ENCODE measurements at regions of chr1 and their contacts with region 1.

Region 1: DNA sequence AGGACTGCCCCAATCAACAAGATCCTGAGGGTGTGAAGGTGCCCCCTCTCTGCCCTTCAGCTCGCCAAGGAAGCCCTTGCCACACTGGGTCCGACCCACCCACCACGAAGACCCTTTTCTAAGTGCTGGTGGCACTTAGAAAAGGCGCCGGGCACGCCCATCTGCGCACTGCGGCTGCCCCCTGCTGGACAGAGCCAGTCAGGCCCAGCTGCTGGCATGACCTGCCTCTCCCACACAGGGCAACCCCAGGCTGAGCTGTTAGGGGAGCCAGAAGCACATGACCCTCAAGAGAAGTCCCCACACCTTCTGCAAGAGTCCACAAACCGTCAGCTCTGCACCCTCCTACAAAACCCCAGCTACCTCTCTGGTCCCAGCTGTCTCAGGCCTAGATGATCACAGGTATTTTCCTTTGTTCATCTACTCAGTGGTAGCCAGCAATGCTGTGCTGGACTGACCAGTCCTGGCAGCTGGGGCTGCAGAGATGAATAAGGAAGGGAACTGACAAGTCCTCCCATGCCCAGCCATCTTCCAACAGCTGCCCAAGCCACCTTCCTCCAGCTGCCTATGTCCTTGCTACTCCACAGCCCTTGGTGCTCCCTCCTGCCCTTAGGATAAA is 40.0 kb upstream of the ZC3H12A start:
- DNase-seq: peak; percentile 50
- H3K4me3 Mint-ChIP-seq: no peak overlapping the region
- H3K27ac Mint-ChIP-seq: no peak overlapping the region
- H3K4me1 Mint-ChIP-seq: no peaks in the 10 kb centered on the region
- H3K27me3 Mint-ChIP-seq: peaks cover 7% of the 10 kb centered on the region

Region 2: DNA sequence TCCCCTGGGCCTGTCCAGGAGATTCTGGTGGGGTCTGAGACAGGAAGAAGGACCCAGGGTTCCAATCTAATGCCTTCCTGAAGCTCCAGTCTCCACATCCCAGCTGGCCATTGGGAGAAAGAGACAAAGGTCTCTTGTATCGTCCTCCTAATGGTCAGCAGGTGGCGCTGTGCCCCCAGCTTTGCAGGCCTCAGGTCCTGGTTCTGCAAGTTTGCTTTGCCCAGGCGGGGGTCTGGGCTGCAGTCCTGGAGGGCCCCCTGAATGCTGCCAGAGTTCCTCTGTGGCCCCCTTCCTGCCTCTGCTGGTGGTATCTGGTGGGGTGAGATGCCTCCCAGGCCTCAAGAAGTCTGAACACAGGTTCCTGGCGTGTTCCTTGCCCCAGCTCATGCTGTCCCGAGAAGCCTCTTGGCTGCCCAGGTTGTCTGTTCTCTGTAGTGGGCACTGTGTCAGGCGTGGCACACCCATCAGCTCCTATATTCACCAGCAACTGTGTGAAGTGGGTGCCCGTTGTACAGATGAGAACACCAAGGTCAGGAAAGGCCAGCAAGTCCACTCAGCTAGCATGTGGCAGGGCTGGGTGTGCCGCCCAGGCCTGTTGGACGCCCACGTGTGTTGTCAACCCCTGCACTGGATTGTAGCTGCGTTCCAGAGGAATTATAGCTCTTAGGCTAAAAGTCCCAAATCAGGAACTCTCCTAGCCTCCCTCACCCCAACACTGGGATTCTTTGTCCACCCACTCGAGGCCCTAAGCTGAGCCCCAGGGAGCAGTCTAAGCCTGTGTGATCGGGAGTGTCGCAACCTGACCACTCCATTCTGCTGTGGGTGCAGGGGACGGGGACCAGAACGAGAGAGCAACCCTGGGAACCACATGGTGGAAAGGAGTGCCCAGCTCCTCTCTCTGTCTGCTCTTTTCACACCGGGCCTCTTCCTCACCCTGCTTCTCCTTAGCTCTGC is 917.8 kb before region 1 on chr1:
- intact Hi-C with region 1: loop called (anchors 1 kb)
- DNase-seq: peak; percentile 15
- H3K4me3 Mint-ChIP-seq: no peak overlapping the region
- H3K27ac Mint-ChIP-seq: no peak overlapping the region
- H3K4me1 Mint-ChIP-seq: no peaks in the 10 kb centered on the region
- H3K27me3 Mint-ChIP-seq: peaks cover 3% of the 10 kb centered on the region

Region 3: GRCh38 chr1:36553591-36554322 is 880.6 kb before region 1 on chr1:
- intact Hi-C with region 1: loop called (anchors 1 kb)
- DNase-seq: peak; percentile 50
- H3K4me3 Mint-ChIP-seq: no peak overlapping the region
- H3K27ac Mint-ChIP-seq: no peak overlapping the region
- H3K4me1 Mint-ChIP-seq: no peaks in the 10 kb centered on the region
- H3K27me3 Mint-ChIP-seq: peaks cover 22% of the 10 kb centered on the region

Region 4: GRCh38 chr1:36576118-36576517 is 858.3 kb before region 1 on chr1:
- intact Hi-C with region 1: loop called (anchors 1 kb)
- DNase-seq: peak; percentile 11
- H3K4me3 Mint-ChIP-seq: no peak overlapping the region
- H3K27ac Mint-ChIP-seq: no peak overlapping the region
- H3K4me1 Mint-ChIP-seq: no peaks in the 10 kb centered on the region
- H3K27me3 Mint-ChIP-seq: peaks cover 9% of the 10 kb centered on the region

Region 5: GRCh38 chr1:36703526-36704208 is 730.7 kb before region 1 on chr1:
- intact Hi-C with region 1: loop called (anchors 1 kb)
- DNase-seq: peak; percentile 44
- H3K4me3 Mint-ChIP-seq: no peak overlapping the region
- H3K27ac Mint-ChIP-seq: no peak overlapping the region
- H3K4me1 Mint-ChIP-seq: peaks cover 5% of the 10 kb centered on the region
- H3K27me3 Mint-ChIP-seq: peaks cover 20% of the 10 kb centered on the region

Measured in activated T-helper 1 cell treated with anti-CD3 and anti-CD28 coated beads, Interleukin-12 subunit alpha, Interleukin-12 subunit beta, Interleukin-2, Interleukin-4 antibody, amounts not matched to agents 30 ng/mL and 10 ng/mL and 1 ng/mL, durations not matched to agents 14 hours and 24 hours and 36 hours (primary cell).